CD4-positive, alpha-beta memory T cell (primary cell): ENCODE measurements at regions of chr13 and their contacts with region 1.

Region 1: GRCh38 chr13:95403828-95404522 is 102.7 kb upstream of the ABCC4 start:
- DNase-seq: peak; percentile 68 to 75 (median 71)
- H3K4me3 ChIP-seq: peak overlapping the region; percentile 56 to 58
- H3K4me3 Mint-ChIP-seq: peak overlapping the region; percentile 90 to 97 (median 93)
- H3K27ac ChIP-seq: no peak overlapping the region
- H3K27ac Mint-ChIP-seq: peak overlapping the region in 4 of 7 donors; percentile 76 to 92 (median 83)
- H3K4me1 ChIP-seq: peaks cover 5% of the 10 kb centered on the region
- H3K4me1 Mint-ChIP-seq: peaks cover 7 to 11% (median 8%) of the 10 kb centered on the region in 4 donors
- H3K27me3 ChIP-seq: no peaks in the 10 kb centered on the region
- H3K27me3 Mint-ChIP-seq: peaks cover 2 to 11% of the 10 kb centered on the region in 2 donors

Region 2: GRCh38 chr13:94674609-94675348 is 729.2 kb before region 1 on chr13:
- CTCF ChIA-PET with region 1: interaction called, 73 read pairs
- POLR2A ChIA-PET with region 1: no interaction called
- intact Hi-C with region 1: loop called (anchors 1 kb)
- DNase-seq: peak in 4 of 5 donors; percentile 20 to 32 (median 22)
- H3K4me3 ChIP-seq: no peak overlapping the region
- H3K4me3 Mint-ChIP-seq: no peak overlapping the region
- H3K27ac ChIP-seq: no peak overlapping the region
- H3K27ac Mint-ChIP-seq: no peak overlapping the region
- H3K4me1 ChIP-seq: no peaks in the 10 kb centered on the region
- H3K4me1 Mint-ChIP-seq: no peaks in the 10 kb centered on the region
- H3K27me3 ChIP-seq: peaks cover 4% of the 10 kb centered on the region
- H3K27me3 Mint-ChIP-seq: peaks cover 18 to 20% of the 10 kb centered on the region in 2 donors

Region 3: GRCh38 chr13:95301183-95301967 is 102.6 kb before region 1 on chr13 and contains the start of gene ABCC4:
- CTCF ChIA-PET with region 1: interaction called, 73 read pairs
- POLR2A ChIA-PET with region 1: no interaction called
- intact Hi-C with region 1: loop called (anchors 1 kb)
- DNase-seq: peak; percentile 37 to 58 (median 50)
- H3K4me3 ChIP-seq: peak within 1 kb of the TSS; percentile 65 to 70
- H3K4me3 Mint-ChIP-seq: peak within 1 kb of the TSS; percentile 82 to 93 (median 88)
- H3K27ac ChIP-seq: peak within 1 kb of the TSS; percentile 43
- H3K27ac Mint-ChIP-seq: peak within 1 kb of the TSS; percentile 36 to 95 (median 54)
- H3K4me1 ChIP-seq: peaks cover 14% of the 10 kb centered on the region
- H3K4me1 Mint-ChIP-seq: peaks cover 22 to 40% (median 30%) of the 10 kb centered on the region in 4 donors
- H3K27me3 ChIP-seq: no peaks in the 10 kb centered on the region
- H3K27me3 Mint-ChIP-seq: peaks cover 0 to 2% of the 10 kb centered on the region in 2 donors
- total RNA-seq, gene ABCC4: 7.9 to 10.0 TPM

Region 4: DNA sequence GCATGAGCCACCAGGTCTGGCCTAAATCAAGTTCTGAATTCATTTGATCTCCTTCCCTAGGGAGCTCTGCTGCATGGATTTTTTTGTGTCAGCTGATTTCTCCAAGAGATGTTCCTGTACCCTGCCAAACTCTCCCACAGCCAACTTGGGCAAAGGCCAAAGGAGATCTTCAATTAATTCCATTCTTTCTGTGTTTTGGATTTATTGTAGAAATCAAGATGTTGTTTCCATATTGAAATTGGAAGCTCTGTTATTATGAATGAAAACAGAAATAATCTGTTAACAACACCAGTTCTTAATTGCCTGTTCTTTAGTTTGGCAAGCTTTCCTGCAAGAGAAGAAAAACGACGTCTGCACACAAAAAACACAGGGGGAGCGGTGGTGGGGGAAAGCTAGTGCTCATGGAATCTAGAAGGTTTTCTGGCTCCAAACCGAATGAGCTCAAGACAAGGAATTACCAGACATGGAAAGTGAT is 16.2 kb before region 1 on chr13:
- CTCF ChIA-PET with region 1: interaction called, 29 read pairs
- POLR2A ChIA-PET with region 1: no interaction called
- intact Hi-C with region 1: no loop called
- DNase-seq: no peak
- H3K4me3 ChIP-seq: no peak overlapping the region
- H3K4me3 Mint-ChIP-seq: no peak overlapping the region
- H3K27ac ChIP-seq: no peak overlapping the region
- H3K27ac Mint-ChIP-seq: peak overlapping the region in 1 of 7 donors; percentile 32
- H3K4me1 ChIP-seq: no peaks in the 10 kb centered on the region
- H3K4me1 Mint-ChIP-seq: no peaks in the 10 kb centered on the region
- H3K27me3 ChIP-seq: no peaks in the 10 kb centered on the region
- H3K27me3 Mint-ChIP-seq: peaks cover 19% of the 10 kb centered on the region in 2 donors

Region 5: GRCh38 chr13:95834134-95834765 is 430.3 kb after region 1 on chr13:
- CTCF ChIA-PET with region 1: no interaction called
- POLR2A ChIA-PET with region 1: no interaction called
- intact Hi-C with region 1: loop called (anchors 5 kb)
- DNase-seq: peak; percentile 52 to 63 (median 59)
- H3K4me3 ChIP-seq: no peak overlapping the region
- H3K4me3 Mint-ChIP-seq: no peak overlapping the region
- H3K27ac ChIP-seq: no peak overlapping the region
- H3K27ac Mint-ChIP-seq: no peak overlapping the region
- H3K4me1 ChIP-seq: no peaks in the 10 kb centered on the region
- H3K4me1 Mint-ChIP-seq: peaks cover 0 to 2% (median 0%) of the 10 kb centered on the region in 4 donors
- H3K27me3 ChIP-seq: no peaks in the 10 kb centered on the region
- H3K27me3 Mint-ChIP-seq: peaks cover 14 to 18% of the 10 kb centered on the region in 2 donors